Activated CD4-positive, alpha-beta memory T cell treated with anti-CD3 and anti-CD28 coated beads, Interleukin-2, amount 10 ng/mL, durations not matched to agents 7 days and 5 days (primary cell): ENCODE measurements at regions of chr5 and their contacts with region 1.

Region 1: GRCh38 chr5:62305715-62306322 is at the start of gene KIF2A:
- DNase-seq: peak; percentile 96
- H3K4me3 Mint-ChIP-seq: peak within 1 kb of the TSS; percentile 98
- H3K27ac Mint-ChIP-seq: peak within 1 kb of the TSS; percentile 96
- H3K4me1 Mint-ChIP-seq: peaks cover 57% of the 10 kb centered on the region
- H3K27me3 Mint-ChIP-seq: no peaks in the 10 kb centered on the region
- total RNA-seq, gene KIF2A: 250 to 251 TPM

Region 2: DNA sequence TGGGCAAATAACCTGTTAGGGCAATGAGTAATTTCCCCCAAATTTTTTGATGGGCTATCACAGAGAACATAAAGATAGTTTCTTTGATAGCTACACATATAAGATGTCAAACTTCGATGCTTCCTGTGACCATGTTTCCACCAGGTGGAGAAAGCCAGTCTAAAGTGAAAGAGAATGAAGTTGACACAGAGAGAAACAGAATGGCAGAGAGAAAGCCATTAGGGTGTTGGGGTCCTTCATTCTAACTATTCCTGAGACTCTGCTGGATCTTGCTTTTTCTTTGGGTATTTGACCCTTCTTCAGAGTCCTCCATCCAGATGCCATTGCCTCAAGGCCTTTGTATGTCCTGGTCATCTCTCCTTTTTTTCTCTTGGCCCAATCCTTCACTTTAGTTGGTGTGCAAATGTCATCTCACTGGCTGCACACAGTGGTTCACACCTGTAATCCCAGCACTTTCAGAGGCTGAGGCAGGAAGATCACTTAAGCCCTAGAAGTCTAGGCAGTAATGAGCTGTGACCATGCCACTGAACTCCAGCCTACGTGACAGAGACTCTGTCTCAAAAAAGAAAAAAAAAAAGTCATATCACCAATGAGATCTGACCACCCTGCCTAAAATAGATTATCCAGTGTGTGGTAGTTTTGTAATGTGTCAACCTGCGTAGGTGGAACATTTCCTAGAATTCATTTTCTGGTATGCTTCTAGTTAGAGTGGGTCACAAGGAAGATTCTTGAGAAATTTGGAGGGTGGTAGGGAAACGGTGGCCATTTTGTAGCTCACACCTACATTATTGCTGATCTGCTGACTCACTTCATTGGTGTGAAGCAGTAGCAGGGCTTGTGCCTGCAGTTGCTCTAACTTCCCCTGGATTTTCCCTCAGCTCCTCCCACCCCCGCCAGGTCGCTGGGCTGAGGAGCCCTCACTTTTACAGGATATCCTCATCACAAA is 20.6 kb before region 1 on chr5:
- CTCF ChIA-PET with region 1: interaction called, 33 read pairs
- POLR2A ChIA-PET with region 1: interaction called, 67 read pairs
- DNase-seq: peak; percentile 78
- H3K4me3 Mint-ChIP-seq: peak overlapping the region; percentile 43
- H3K27ac Mint-ChIP-seq: peak overlapping the region; percentile 98
- H3K4me1 Mint-ChIP-seq: peaks cover 76% of the 10 kb centered on the region
- H3K27me3 Mint-ChIP-seq: no peaks in the 10 kb centered on the region

Region 3: DNA sequence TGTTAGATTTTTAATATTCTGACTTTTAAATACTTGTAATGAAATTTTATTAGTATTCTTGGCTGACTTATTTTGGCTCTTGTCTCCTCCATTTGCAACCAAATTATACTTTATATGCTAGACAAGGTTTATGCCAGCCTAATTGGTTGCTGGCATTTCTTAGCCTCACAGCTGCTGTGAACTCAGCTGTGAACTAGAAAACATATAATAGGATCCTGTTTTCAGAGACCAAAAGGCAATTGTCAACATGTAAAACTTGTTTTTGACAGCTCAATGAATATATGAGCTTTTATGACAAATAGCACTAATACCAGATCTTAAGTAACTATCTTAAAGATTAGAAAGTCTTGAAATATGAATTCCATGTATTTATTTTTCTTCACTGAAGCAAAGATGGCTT is 26.1 kb after region 1 on chr5:
- CTCF ChIA-PET with region 1: interaction called, 5 read pairs
- POLR2A ChIA-PET with region 1: interaction called, 11 read pairs
- DNase-seq: no peak
- H3K4me3 Mint-ChIP-seq: no peak overlapping the region
- H3K27ac Mint-ChIP-seq: no peak overlapping the region
- H3K4me1 Mint-ChIP-seq: peaks cover 66% of the 10 kb centered on the region
- H3K27me3 Mint-ChIP-seq: no peaks in the 10 kb centered on the region

Region 4: DNA sequence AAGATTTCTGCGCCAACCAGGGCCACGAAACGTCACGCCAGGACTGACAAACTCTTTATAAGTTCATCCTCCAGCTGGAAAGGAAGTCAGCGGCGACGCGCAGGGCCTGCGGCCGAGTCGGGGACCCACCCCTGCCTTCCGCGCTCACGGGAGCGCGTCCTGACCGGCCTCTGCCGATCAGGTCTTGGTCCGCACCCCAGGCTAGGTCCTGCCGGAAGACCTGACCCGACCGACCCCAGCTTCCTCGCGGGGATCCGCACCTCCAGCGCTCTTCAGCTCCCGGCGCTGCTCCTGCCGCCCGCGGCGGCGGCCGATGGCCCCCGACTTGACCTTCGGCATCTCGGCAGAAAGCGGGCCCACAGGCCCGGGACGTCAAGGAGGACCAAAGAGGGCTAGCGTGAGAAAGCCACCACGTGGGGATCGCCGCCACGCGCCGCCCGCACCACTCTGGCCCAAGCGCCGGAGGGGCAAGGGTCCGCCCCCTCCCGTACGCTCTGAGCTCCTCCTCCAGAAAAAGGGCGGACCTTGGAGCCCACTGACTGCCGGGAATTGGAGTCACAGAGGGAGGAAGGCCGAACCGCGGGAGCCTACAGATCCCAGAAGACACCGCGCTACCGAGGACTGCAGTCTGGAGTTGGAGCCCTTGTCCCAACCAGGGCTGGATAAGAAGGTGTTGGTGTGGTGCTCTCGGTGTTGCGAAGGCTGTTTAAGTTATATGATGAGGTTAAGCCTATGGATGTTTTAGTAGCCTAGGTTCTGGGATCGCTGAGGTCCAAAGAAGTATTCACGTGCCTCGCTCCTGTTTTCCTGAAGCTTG is 97.8 kb after region 1 on chr5 and contains the start of gene DIMT1:
- CTCF ChIA-PET with region 1: interaction called, 8 read pairs
- POLR2A ChIA-PET with region 1: interaction called, 27 read pairs
- DNase-seq: peak; percentile 96
- H3K4me3 Mint-ChIP-seq: peak within 1 kb of the TSS; percentile 98
- H3K27ac Mint-ChIP-seq: peak within 1 kb of the TSS; percentile 88
- H3K4me1 Mint-ChIP-seq: peaks cover 33% of the 10 kb centered on the region
- H3K27me3 Mint-ChIP-seq: no peaks in the 10 kb centered on the region
- total RNA-seq, gene DIMT1: 28.9 to 33.6 TPM

Region 5: DNA sequence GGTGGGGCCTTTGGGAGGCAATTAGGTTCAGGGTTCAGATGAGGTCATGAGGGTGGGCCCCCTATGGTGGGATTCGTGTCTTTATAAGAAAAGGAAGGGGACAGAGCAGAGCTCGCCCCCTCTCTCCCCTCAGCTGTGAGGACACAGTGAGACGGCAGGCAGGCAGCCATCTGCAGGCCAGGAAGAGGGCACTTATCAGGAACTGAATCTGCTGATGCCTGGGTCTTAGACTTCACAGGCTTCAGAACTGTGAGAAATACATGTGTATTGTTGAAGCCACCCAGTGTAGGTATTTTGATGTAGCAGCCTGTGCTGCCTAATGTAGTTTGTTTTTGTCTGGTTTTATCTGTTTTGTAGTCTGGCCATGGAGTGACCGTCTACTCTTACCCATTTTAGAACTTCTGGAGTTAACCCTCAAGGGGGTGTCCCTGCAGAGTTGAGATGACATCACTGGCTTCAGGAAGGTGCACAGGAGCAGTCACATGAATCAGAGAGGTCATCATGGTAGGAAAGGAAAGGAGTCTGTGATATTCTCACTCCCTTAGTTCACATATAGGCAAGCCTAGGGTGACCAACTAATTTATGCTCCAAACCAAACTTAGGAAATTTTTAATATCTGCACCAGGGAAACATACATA is 343.8 kb after region 1 on chr5:
- CTCF ChIA-PET with region 1: no interaction called
- POLR2A ChIA-PET with region 1: no interaction called
- DNase-seq: no peak
- H3K4me3 Mint-ChIP-seq: no peak overlapping the region
- H3K27ac Mint-ChIP-seq: no peak overlapping the region
- H3K4me1 Mint-ChIP-seq: peaks cover 15% of the 10 kb centered on the region
- H3K27me3 Mint-ChIP-seq: no peaks in the 10 kb centered on the region

Region 6: GRCh38 chr5:62779010-62779422 is 473.2 kb after region 1 on chr5:
- CTCF ChIA-PET with region 1: no interaction called
- POLR2A ChIA-PET with region 1: no interaction called
- DNase-seq: no peak
- H3K4me3 Mint-ChIP-seq: no peak overlapping the region
- H3K27ac Mint-ChIP-seq: no peak overlapping the region
- H3K4me1 Mint-ChIP-seq: peaks cover 3% of the 10 kb centered on the region
- H3K27me3 Mint-ChIP-seq: peaks cover 5% of the 10 kb centered on the region